ENCODE measurements at regions of chr18 and their contacts with region 1.

Region 1: DNA sequence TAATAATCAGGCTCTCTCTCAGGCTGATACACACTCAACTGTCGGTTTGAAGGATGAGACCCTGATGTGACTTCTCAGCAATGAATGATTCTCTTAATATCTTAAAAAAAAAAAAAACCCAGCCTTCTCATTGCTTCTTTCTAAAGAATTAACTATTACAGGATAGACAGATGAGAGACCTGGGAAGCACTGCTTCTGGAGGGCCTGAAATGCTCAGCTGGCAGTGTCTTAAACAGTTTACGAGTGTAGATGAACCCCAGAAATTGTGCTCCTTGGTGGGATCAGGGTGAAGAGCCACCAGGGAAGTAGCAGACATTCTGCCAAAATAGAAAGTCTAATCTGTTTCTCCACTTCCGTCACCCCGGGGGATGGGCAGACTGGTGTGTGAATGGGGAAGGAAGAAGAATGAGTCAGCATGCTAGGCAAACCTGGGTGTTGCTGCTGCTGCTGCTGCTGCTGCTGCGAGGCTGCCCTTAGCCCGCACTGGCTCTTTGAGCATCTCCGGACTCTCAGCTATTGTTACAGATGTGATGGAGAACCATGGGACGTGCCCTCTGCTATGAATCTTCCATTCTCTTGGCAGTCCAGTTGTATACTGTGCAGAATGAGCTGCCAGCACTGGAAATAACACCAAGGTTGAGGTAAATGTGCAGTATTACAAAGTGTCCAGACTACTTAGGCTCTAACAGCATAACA is 158.4 kb downstream of the SETBP1 start:
- DNase-seq: peak; percentile 58
- ATAC-seq: peak; percentile 83
- H3K4me3 Mint-ChIP-seq: peak overlapping the region; percentile 61
- H3K27ac Mint-ChIP-seq: peak overlapping the region; percentile 81
- H3K4me1 Mint-ChIP-seq: peaks cover 81% of the 10 kb centered on the region
- H3K27me3 Mint-ChIP-seq: no peaks in the 10 kb centered on the region
- CTCF ChIP-seq: no peak

Region 2: GRCh38 chr18:44507729-44508325 is 331.3 kb before region 1 on chr18:
- CTCF ChIA-PET with region 1: no interaction called
- POLR2A ChIA-PET with region 1: no interaction called
- intact Hi-C with region 1: loop called (anchors 10 kb)
- DNase-seq: peak; percentile 26
- ATAC-seq: peak; percentile 90
- H3K4me3 Mint-ChIP-seq: no peak overlapping the region
- H3K27ac Mint-ChIP-seq: no peak overlapping the region
- H3K4me1 Mint-ChIP-seq: peaks cover 24% of the 10 kb centered on the region
- H3K27me3 Mint-ChIP-seq: no peaks in the 10 kb centered on the region
- CTCF ChIP-seq: no peak

Region 3: DNA sequence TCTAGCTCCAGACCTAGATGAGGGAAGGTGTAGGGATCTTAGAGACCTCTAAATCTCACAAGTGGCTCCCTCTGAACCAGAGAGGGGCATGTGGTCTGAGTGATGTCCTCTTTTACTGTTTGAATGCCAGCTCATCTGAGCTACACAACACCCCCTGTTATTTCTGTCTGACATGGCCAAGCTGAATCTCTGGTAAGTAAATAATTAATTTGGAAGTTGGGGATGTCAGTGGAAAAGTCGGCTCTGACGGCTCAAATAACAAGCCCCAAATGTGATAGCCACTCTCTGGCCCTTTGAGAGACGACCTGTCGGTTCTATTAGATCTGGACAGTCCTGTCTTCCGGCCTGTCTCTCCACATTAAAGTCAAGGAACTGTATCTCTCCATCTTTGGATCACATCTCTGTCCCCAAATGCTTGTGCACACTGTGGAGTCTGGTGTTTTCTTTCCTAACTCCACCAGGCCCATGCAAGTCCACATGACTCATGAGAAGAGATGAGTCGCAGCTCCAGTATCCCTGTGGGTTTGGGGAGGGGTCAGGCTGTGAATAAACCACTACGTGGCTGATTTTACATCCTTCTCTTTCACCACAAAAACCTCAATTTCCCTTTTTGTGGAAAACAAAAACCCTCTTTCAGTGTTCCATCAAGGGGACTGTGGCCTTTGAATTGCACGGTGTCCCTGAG is 105.9 kb before region 1 on chr18:
- CTCF ChIA-PET with region 1: no interaction called
- POLR2A ChIA-PET with region 1: no interaction called
- intact Hi-C with region 1: loop called (anchors 5 kb)
- DNase-seq: no peak
- ATAC-seq: no peak
- H3K4me3 Mint-ChIP-seq: peak overlapping the region; percentile 24
- H3K27ac Mint-ChIP-seq: peak overlapping the region; percentile 20
- H3K4me1 Mint-ChIP-seq: peaks cover 95% of the 10 kb centered on the region
- H3K27me3 Mint-ChIP-seq: no peaks in the 10 kb centered on the region
- CTCF ChIP-seq: no peak

Region 4: DNA sequence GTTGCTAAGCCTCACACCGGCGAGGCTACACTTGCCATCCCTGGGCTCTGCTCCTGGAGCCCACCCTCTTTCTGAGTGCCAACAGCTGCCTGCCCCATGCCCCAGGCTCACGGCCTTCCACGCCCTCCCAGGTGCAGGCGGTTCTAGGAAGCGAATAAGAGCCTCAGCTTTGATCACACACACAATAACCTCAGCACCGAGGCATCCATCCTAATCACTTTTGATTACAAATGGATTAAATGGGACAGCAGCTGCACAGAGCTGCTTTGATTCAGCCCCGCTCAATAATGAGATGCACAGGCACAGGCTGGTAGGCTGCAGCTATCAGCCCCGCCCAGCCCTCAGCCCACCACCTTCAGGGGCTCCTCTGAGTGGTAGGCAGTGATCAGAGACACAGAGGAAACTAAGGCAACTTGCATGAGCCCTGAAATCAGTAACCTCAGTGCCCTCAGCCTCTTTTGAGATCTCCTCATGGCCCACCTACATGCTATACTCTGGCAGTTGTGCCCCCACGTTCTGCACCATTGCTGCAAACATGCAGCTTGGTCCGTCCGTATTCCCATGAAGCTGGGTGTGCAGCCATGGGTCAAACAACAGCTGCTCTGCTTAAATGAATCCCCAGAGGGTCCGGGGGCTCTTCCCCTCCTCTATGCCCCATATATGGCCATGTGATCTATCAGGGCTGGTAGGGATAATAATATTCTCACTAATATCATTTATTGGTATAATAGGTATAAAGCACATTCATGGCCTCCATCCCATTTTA is 12.9 kb after region 1 on chr18:
- CTCF ChIA-PET with region 1: no interaction called
- POLR2A ChIA-PET with region 1: interaction called, 4 read pairs
- intact Hi-C with region 1: loop called (anchors 1 kb)
- DNase-seq: no peak
- ATAC-seq: no peak
- H3K4me3 Mint-ChIP-seq: no peak overlapping the region
- H3K27ac Mint-ChIP-seq: no peak overlapping the region
- H3K4me1 Mint-ChIP-seq: peaks cover 85% of the 10 kb centered on the region
- H3K27me3 Mint-ChIP-seq: no peaks in the 10 kb centered on the region
- CTCF ChIP-seq: no peak

Measured in activated B cell treated with CpG ODN at 0.5 μM for 24 hours (primary cell).